ENCODE measurements at regions of chr9 and their contacts with region 1.

Region 1: DNA sequence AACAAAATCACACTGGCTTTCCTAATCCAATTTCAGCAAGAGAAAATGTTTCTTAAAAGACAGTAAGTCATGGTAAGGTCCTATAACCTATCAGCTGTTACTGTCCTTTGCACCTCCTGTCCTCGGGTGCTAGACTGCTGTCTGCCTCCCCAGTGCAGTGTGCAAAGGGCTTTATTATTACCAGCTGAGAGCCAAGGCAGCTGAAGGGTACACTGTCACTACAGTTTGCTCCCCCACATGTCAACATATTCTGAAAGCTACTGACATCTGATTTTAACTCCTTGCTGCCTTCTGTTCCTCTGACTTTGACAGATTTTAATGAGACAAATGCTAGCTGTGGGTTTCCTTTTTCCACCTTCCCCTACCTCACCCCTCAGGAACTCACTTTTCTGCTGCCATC is 389.4 kb upstream of the SLC24A2 start:
- DNase-seq: no peak
- ATAC-seq: no peak
- H3K4me3 Mint-ChIP-seq: no peak overlapping the region
- H3K27ac Mint-ChIP-seq: no peak overlapping the region
- H3K4me1 Mint-ChIP-seq: no peaks in the 10 kb centered on the region
- H3K27me3 Mint-ChIP-seq: peaks cover 1% of the 10 kb centered on the region
- CTCF ChIP-seq: no peak

Region 2: GRCh38 chr9:20191228-20191840 is 13.1 kb after region 1 on chr9:
- CTCF ChIA-PET with region 1: interaction called, 10 read pairs
- POLR2A ChIA-PET with region 1: no interaction called
- intact Hi-C with region 1: no loop called
- DNase-seq: no peak
- ATAC-seq: no peak
- H3K4me3 Mint-ChIP-seq: no peak overlapping the region
- H3K27ac Mint-ChIP-seq: no peak overlapping the region
- H3K4me1 Mint-ChIP-seq: no peaks in the 10 kb centered on the region
- H3K27me3 Mint-ChIP-seq: peaks cover 3% of the 10 kb centered on the region
- CTCF ChIP-seq: no peak

Measured in activated CD8-positive, alpha-beta T cell treated with anti-CD3 and anti-CD28 coated beads for 36 hours (primary cell).